Activated T-helper 1 cell treated with anti-CD3 and anti-CD28 coated beads, Interleukin-12 subunit alpha, Interleukin-12 subunit beta, Interleukin-2, Interleukin-4 antibody, amounts not matched to agents 30 ng/mL and 10 ng/mL and 1 ng/mL, durations not matched to agents 14 hours and 24 hours and 36 hours (primary cell): ENCODE measurements at regions of chr5 and their contacts with region 1.

Region 1: GRCh38 chr5:59174248-59174844 is 591.5 kb downstream of the RAB3C start:
- DNase-seq: no peak
- H3K4me3 Mint-ChIP-seq: no peak overlapping the region
- H3K27ac Mint-ChIP-seq: no peak overlapping the region
- H3K4me1 Mint-ChIP-seq: peaks cover 53% of the 10 kb centered on the region
- H3K27me3 Mint-ChIP-seq: no peaks in the 10 kb centered on the region

Region 2: GRCh38 chr5:58925627-58926540 is 248.5 kb before region 1 on chr5:
- intact Hi-C with region 1: no loop called
- DNase-seq: no peak
- H3K4me3 Mint-ChIP-seq: no peak overlapping the region
- H3K27ac Mint-ChIP-seq: no peak overlapping the region
- H3K4me1 Mint-ChIP-seq: peaks cover 31% of the 10 kb centered on the region
- H3K27me3 Mint-ChIP-seq: peaks cover 3% of the 10 kb centered on the region

Region 3: DNA sequence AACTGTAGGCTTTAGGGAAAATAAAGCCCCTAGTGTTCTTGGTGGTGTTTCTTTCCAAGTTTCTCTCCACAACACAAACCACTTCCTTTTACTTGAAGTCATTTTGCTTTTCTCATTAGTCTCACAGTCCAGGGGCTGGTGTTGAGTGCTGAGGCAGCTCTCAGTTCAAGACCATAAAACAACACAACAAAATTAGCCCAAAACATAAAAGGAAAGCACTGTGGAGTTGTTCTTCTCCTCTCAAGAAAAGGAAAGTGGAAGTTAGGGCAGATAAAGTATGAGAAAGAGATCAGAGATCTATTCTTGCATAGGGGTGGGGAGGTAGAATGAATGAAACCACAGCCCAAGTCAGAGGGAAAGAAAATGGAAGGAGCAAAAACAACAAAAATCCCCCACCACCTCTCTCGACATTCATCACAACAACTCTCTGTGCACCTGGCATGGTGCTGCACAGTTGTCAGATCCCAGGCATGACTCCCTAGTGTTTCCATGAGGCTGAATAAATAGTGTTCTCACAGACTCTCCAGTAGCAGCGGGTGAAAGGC is 21.6 kb before region 1 on chr5:
- intact Hi-C with region 1: loop called (anchors 2 kb)
- DNase-seq: peak; percentile 14
- H3K4me3 Mint-ChIP-seq: peak overlapping the region; percentile 58
- H3K27ac Mint-ChIP-seq: no peak overlapping the region
- H3K4me1 Mint-ChIP-seq: no peaks in the 10 kb centered on the region
- H3K27me3 Mint-ChIP-seq: no peaks in the 10 kb centered on the region